Naive thymus-derived CD4-positive, alpha-beta T cell (primary cell): ENCODE measurements at regions of chr12 and their contacts with region 1.

Region 1: GRCh38 chr12:122860346-122861090 is 25.3 kb downstream of the HIP1R start:
- DNase-seq: peak; percentile 65 to 83 (median 75)
- ATAC-seq: peak; percentile 70
- H3K4me3 ChIP-seq: no peak overlapping the region
- H3K4me3 Mint-ChIP-seq: no peak overlapping the region
- H3K27ac ChIP-seq: no peak overlapping the region
- H3K27ac Mint-ChIP-seq: peak overlapping the region in 4 of 9 donors; percentile 33 to 65 (median 59)
- H3K4me1 ChIP-seq: no peaks in the 10 kb centered on the region
- H3K4me1 Mint-ChIP-seq: peaks cover 0 to 8% (median 0%) of the 10 kb centered on the region in 7 donors
- H3K27me3 ChIP-seq: no peaks in the 10 kb centered on the region
- H3K27me3 Mint-ChIP-seq: no peaks in the 10 kb centered on the region

Region 2: DNA sequence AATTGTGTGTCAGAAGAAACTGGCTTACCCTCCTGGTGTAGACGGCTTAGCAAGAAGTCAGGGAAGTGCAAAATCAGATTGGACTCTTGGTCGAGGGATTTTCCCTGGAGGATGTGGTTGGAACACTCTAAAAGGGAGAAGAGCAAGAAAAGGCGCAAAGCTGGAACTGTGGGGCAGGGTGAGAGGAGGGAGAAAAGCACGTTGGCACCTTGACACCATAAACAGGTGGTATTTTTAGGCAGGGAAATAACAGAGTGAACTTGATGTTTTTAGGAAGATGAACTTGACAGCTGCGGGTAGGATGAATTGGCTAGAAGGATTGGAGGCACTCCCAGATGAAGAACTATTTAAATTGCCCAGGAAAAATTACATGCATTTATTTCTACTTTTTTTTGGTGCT is 225.0 kb before region 1 on chr12:
- CTCF ChIA-PET with region 1: no interaction called
- POLR2A ChIA-PET with region 1: no interaction called
- intact Hi-C with region 1: loop called in 1 of 2 experiments (anchors 5 kb)
- DNase-seq: no peak
- ATAC-seq: no peak
- H3K4me3 ChIP-seq: no peak overlapping the region
- H3K4me3 Mint-ChIP-seq: no peak overlapping the region
- H3K27ac ChIP-seq: no peak overlapping the region
- H3K27ac Mint-ChIP-seq: peak overlapping the region in 1 of 9 donors; percentile 68
- H3K4me1 ChIP-seq: no peaks in the 10 kb centered on the region
- H3K4me1 Mint-ChIP-seq: peaks cover 0 to 3% (median 0%) of the 10 kb centered on the region in 7 donors
- H3K27me3 ChIP-seq: no peaks in the 10 kb centered on the region
- H3K27me3 Mint-ChIP-seq: no peaks in the 10 kb centered on the region

Region 3: DNA sequence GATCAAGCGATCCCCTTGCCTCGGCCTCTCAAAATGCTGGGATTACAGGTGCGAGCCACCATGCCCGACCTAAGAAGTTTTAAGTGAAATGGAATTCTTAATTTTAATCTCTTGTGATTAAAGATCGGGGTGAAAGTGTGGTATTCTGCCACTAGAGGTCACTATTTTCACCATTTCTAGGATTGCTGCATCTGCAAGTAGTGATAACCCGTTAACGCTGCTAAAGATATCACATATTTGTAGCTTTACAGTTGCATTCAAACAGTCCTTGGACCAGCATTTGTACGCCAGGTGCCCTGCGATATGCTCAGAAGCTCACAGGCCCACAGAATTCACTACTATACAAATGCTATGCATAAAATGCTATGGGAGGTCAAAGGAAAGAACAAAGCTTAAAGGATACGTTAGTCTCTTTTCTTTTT is 66.8 kb before region 1 on chr12:
- CTCF ChIA-PET with region 1: interaction called, 32 read pairs
- POLR2A ChIA-PET with region 1: interaction called, 3 read pairs
- intact Hi-C with region 1: loop called (anchors 1 to 2 kb)
- DNase-seq: peak in 7 of 9 donors; percentile 35 to 72 (median 62)
- ATAC-seq: peak; percentile 82
- H3K4me3 ChIP-seq: no peak overlapping the region
- H3K4me3 Mint-ChIP-seq: no peak overlapping the region
- H3K27ac ChIP-seq: no peak overlapping the region
- H3K27ac Mint-ChIP-seq: no peak overlapping the region
- H3K4me1 ChIP-seq: no peaks in the 10 kb centered on the region
- H3K4me1 Mint-ChIP-seq: peaks cover 0 to 3% (median 0%) of the 10 kb centered on the region in 7 donors
- H3K27me3 ChIP-seq: no peaks in the 10 kb centered on the region
- H3K27me3 Mint-ChIP-seq: no peaks in the 10 kb centered on the region

Region 4: GRCh38 chr12:122834104-122834920 is 26.2 kb before region 1 on chr12:
- CTCF ChIA-PET with region 1: interaction called, 3 read pairs
- POLR2A ChIA-PET with region 1: interaction called, 4 read pairs
- intact Hi-C with region 1: loop called in 1 of 2 experiments (anchors 1 kb)
- DNase-seq: peak in 2 of 9 donors; percentile 27 to 33
- ATAC-seq: peak; percentile 30
- H3K4me3 ChIP-seq: peak overlapping the region; percentile 55
- H3K4me3 Mint-ChIP-seq: peak overlapping the region; percentile 85 to 99 (median 92)
- H3K27ac ChIP-seq: peak overlapping the region; percentile 50
- H3K27ac Mint-ChIP-seq: peak overlapping the region; percentile 87 to 98 (median 95)
- H3K4me1 ChIP-seq: peaks cover 0 to 13% of the 10 kb centered on the region in 2 donors
- H3K4me1 Mint-ChIP-seq: peaks cover 30 to 48% (median 44%) of the 10 kb centered on the region in 7 donors
- H3K27me3 ChIP-seq: no peaks in the 10 kb centered on the region
- H3K27me3 Mint-ChIP-seq: peaks cover 0 to 29% (median 0%) of the 10 kb centered on the region in 5 donors

Region 5: GRCh38 chr12:122871851-122872780 is 11.6 kb after region 1 on chr12:
- CTCF ChIA-PET with region 1: interaction called, 21 read pairs
- POLR2A ChIA-PET with region 1: interaction called, 4 read pairs
- intact Hi-C with region 1: no loop called
- DNase-seq: peak in 5 of 9 donors; percentile 40 to 71 (median 43)
- ATAC-seq: peak; percentile 61
- H3K4me3 ChIP-seq: peak overlapping the region; percentile 50
- H3K4me3 Mint-ChIP-seq: peak overlapping the region; percentile 82 to 96 (median 89)
- H3K27ac ChIP-seq: peak overlapping the region; percentile 64
- H3K27ac Mint-ChIP-seq: peak overlapping the region; percentile 78 to 97 (median 87)
- H3K4me1 ChIP-seq: peaks cover 31 to 51% of the 10 kb centered on the region in 2 donors
- H3K4me1 Mint-ChIP-seq: peaks cover 47 to 82% (median 68%) of the 10 kb centered on the region in 7 donors
- H3K27me3 ChIP-seq: no peaks in the 10 kb centered on the region
- H3K27me3 Mint-ChIP-seq: peaks cover 0 to 9% (median 0%) of the 10 kb centered on the region in 5 donors

Region 6: GRCh38 chr12:122880668-122881067 is 20.1 kb after region 1 on chr12:
- CTCF ChIA-PET with region 1: interaction called, 11 read pairs
- POLR2A ChIA-PET with region 1: no interaction called
- intact Hi-C with region 1: no loop called
- DNase-seq: peak in 1 of 9 donors; percentile 20
- ATAC-seq: peak; percentile 68
- H3K4me3 ChIP-seq: no peak overlapping the region
- H3K4me3 Mint-ChIP-seq: peak overlapping the region in 4 of 10 donors; percentile 2 to 52 (median 36)
- H3K27ac ChIP-seq: peak overlapping the region; percentile 9
- H3K27ac Mint-ChIP-seq: peak overlapping the region in 8 of 9 donors; percentile 49 to 83 (median 67)
- H3K4me1 ChIP-seq: peaks cover 48 to 49% of the 10 kb centered on the region in 2 donors
- H3K4me1 Mint-ChIP-seq: peaks cover 63 to 97% (median 91%) of the 10 kb centered on the region in 7 donors
- H3K27me3 ChIP-seq: no peaks in the 10 kb centered on the region
- H3K27me3 Mint-ChIP-seq: peaks cover 0 to 26% (median 0%) of the 10 kb centered on the region in 5 donors

Region 7: GRCh38 chr12:122951979-122952892 is 91.7 kb after region 1 on chr12:
- CTCF ChIA-PET with region 1: interaction called, 57 read pairs
- POLR2A ChIA-PET with region 1: interaction called, 3 read pairs
- intact Hi-C with region 1: loop called (anchors 1 kb)
- DNase-seq: peak; percentile 53 to 73 (median 68)
- ATAC-seq: peak; percentile 94
- H3K4me3 ChIP-seq: no peak overlapping the region
- H3K4me3 Mint-ChIP-seq: no peak overlapping the region
- H3K27ac ChIP-seq: no peak overlapping the region
- H3K27ac Mint-ChIP-seq: peak overlapping the region in 4 of 9 donors; percentile 22 to 51 (median 35)
- H3K4me1 ChIP-seq: peaks cover 0 to under 1% of the 10 kb centered on the region in 2 donors
- H3K4me1 Mint-ChIP-seq: peaks cover 0 to 15% (median 5%) of the 10 kb centered on the region in 7 donors
- H3K27me3 ChIP-seq: no peaks in the 10 kb centered on the region
- H3K27me3 Mint-ChIP-seq: no peaks in the 10 kb centered on the region